Caco-2 (cell line): ENCODE measurements at regions of chr7 and their contacts with region 1.

Region 1: DNA sequence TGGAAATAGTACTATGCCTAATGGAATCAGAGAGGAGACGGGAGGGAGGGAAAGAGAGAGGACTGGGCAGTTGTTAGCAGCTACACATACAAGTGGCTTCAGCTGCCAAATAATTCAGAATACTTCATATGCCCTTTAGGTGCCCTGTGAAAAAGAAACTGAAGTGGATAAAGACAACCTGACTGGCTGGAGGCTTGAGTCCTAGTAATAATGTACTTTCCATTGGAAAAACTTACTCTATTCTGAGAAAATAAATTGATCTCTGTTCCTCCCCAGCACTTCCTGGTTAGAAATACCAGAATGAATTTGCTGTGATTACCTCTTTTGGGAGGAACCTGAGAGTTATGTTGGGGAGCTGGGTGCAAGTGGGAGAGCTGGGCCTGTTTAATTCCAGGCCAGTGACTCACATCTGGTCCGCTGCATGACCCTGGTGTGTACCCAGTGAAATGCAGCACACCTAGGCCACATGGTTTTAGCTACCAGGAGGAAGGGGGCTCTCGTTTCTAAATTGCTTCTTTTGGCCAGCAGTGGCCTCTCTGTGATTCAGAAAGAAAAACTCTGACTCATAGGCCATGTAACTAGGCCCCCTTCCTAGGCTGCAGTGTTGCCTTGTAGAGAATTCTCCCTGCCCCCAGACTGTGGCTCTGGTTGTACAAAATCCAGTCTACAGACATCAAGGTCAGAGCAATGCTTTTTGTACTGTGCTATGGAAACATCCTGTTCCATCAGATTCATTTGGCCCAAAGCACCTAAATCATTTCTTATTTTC is 6.5 kb downstream of the AGFG2 start:
- DNase-seq: peak; percentile 69 to 75
- H3K4me3 ChIP-seq: no peak overlapping the region
- H3K4me3 Mint-ChIP-seq: peak overlapping the region; percentile 52
- H3K27ac Mint-ChIP-seq: peak overlapping the region; percentile 80
- H3K4me1 ChIP-seq: peaks cover 61% of the 10 kb centered on the region
- H3K4me1 Mint-ChIP-seq: peaks cover 62% of the 10 kb centered on the region
- H3K27me3 ChIP-seq: no peaks in the 10 kb centered on the region
- H3K27me3 Mint-ChIP-seq: no peaks in the 10 kb centered on the region
- CTCF ChIP-seq: no peak

Region 2: GRCh38 chr7:100478966-100479665 is 66.4 kb before region 1 on chr7 and contains the start of gene TSC22D4:
- CTCF ChIA-PET with region 1: no interaction called
- POLR2A ChIA-PET with region 1: no interaction called
- intact Hi-C with region 1: loop called (anchors 2 kb)
- DNase-seq: peak; percentile 87 to 93
- H3K4me3 ChIP-seq: peak within 1 kb of the TSS; percentile 94
- H3K4me3 Mint-ChIP-seq: peak within 1 kb of the TSS; percentile 100
- H3K27ac Mint-ChIP-seq: peak within 1 kb of the TSS; percentile 80
- H3K4me1 ChIP-seq: peaks cover 7% of the 10 kb centered on the region; the same call in 1 of the 2 replicates
- H3K4me1 Mint-ChIP-seq: peaks cover 22% of the 10 kb centered on the region
- H3K27me3 ChIP-seq: no peaks in the 10 kb centered on the region
- H3K27me3 Mint-ChIP-seq: no peaks in the 10 kb centered on the region
- CTCF ChIP-seq: no peak
- total RNA-seq, gene TSC22D4: 27.2 and 32.0 TPM in 2 replicates

Region 3: DNA sequence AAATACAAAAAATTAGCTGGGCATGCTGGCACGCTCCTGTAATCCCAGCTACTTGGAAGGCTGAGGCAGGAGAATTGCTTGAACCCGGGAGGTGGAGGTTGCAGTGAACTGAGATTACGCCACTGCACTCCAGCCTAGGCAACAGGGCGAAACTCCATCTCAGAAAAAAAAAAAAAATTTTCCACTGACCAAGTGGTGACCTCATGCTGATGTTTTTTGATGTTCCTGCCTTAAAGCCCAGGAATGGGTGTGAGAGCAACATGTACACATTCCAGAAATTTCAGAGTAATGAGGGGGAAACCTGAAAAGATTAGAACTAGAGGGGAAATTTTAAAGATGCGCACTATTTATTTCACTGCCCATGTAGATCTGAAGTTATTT is 42.2 kb before region 1 on chr7:
- CTCF ChIA-PET with region 1: no interaction called
- POLR2A ChIA-PET with region 1: no interaction called
- intact Hi-C with region 1: loop called (anchors 5 kb)
- DNase-seq: peak in 1 of 2 experiments; percentile 59
- H3K4me3 ChIP-seq: no peak overlapping the region
- H3K4me3 Mint-ChIP-seq: peak overlapping the region; percentile 3
- H3K27ac Mint-ChIP-seq: peak overlapping the region; percentile 78
- H3K4me1 ChIP-seq: peaks cover 27% of the 10 kb centered on the region
- H3K4me1 Mint-ChIP-seq: peaks cover 14% of the 10 kb centered on the region
- H3K27me3 ChIP-seq: no peaks in the 10 kb centered on the region
- H3K27me3 Mint-ChIP-seq: no peaks in the 10 kb centered on the region
- CTCF ChIP-seq: no peak